RWPE1 (cell line): ENCODE measurements at regions of chr5 and their contacts with region 1.

Region 1: GRCh38 chr5:138464008-138464387 is 1.3 kb upstream of the EGR1 start:
- DNase-seq: peak; percentile 98
- H3K27ac ChIP-seq: peak overlapping the region; percentile 97
- CTCF ChIP-seq: peak; percentile 99

Region 2: GRCh38 chr5:138274189-138274853 is 189.7 kb before region 1 on chr5 and contains the start of gene GFRA3:
- CTCF ChIA-PET with region 1: no interaction called
- POLR2A ChIA-PET with region 1: no interaction called
- DNase-seq: no peak
- H3K27ac ChIP-seq: no peak within 1 kb of the TSS
- CTCF ChIP-seq: no peak

Region 3: GRCh38 chr5:138491669-138492559 is 27.9 kb after region 1 on chr5:
- CTCF ChIA-PET with region 1: interaction called, 6 read pairs
- POLR2A ChIA-PET with region 1: interaction called, 22 read pairs
- DNase-seq: peak; percentile 94
- H3K27ac ChIP-seq: peak overlapping the region; percentile 82
- CTCF ChIP-seq: no peak

Region 4: GRCh38 chr5:138503487-138504270 is 39.7 kb after region 1 on chr5:
- CTCF ChIA-PET with region 1: interaction called, 58 read pairs
- POLR2A ChIA-PET with region 1: interaction called, 24 read pairs
- DNase-seq: peak; percentile 86
- H3K27ac ChIP-seq: peak overlapping the region; percentile 91
- CTCF ChIP-seq: peak; percentile 90

Region 5: GRCh38 chr5:138542956-138543729 is 79.1 kb after region 1 on chr5 and contains the start of gene ETF1:
- CTCF ChIA-PET with region 1: interaction called, 13 read pairs
- POLR2A ChIA-PET with region 1: interaction called, 17 read pairs
- DNase-seq: peak; percentile 100
- H3K27ac ChIP-seq: peak within 1 kb of the TSS; percentile 88
- CTCF ChIP-seq: no peak